ENCODE measurements at regions of chr5 and their contacts with region 1.

Region 1: GRCh38 chr5:151115274-151115905 is 34.6 kb upstream of the TNIP1 start:
- DNase-seq: peak; percentile 77
- ATAC-seq: peak; percentile 76
- H3K4me3 Mint-ChIP-seq: no peak overlapping the region
- H3K27ac Mint-ChIP-seq: peak overlapping the region; percentile 61
- H3K4me1 Mint-ChIP-seq: peaks cover 2% of the 10 kb centered on the region
- H3K27me3 Mint-ChIP-seq: no peaks in the 10 kb centered on the region

Region 2: GRCh38 chr5:150801117-150801927 is 314.1 kb before region 1 on chr5:
- CTCF ChIA-PET with region 1: interaction called, 10 read pairs
- POLR2A ChIA-PET with region 1: no interaction called
- DNase-seq: no peak
- ATAC-seq: peak; percentile 53
- H3K4me3 Mint-ChIP-seq: no peak overlapping the region
- H3K27ac Mint-ChIP-seq: no peak overlapping the region
- H3K4me1 Mint-ChIP-seq: peaks cover 9% of the 10 kb centered on the region
- H3K27me3 Mint-ChIP-seq: peaks cover 3% of the 10 kb centered on the region

Region 3: DNA sequence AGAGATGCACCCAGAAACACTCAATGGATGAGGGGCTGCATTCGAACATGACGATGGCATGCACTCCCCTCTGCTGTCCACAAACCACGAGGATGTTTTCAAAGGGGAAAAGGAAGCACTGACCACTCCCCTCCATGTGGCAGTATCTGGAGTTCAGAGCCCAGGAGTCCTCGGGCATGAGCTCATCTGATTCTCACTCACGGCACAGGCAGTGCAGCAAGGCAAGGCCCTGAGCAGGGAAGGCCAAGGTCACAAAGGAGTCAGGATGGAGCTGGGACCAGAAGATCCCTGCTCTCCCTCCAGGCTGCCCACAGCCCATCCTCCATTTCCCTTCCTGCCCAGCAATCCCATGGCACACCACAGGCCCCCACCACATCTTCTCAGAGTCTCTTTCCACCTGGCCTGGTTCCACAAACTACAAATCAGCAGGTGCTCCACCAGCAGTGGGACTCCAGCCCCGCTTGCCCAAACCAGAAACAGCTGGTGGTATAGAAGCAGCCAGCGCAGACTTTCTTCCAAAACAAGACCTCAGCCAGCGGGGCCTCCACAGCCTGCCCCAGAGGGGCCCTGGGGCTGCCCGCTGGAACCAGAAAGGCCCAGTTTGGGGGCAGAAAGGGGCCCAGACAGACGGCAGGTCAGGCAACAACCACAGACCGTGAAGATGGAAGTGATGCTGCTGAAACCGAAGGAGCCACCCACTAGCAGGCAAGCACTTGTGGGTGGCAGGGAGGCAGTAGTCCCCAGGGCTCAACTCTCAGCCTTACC is 46.8 kb before region 1 on chr5:
- CTCF ChIA-PET with region 1: interaction called, 43 read pairs
- POLR2A ChIA-PET with region 1: no interaction called
- DNase-seq: no peak
- ATAC-seq: peak; percentile 66
- H3K4me3 Mint-ChIP-seq: peak overlapping the region; percentile 28
- H3K27ac Mint-ChIP-seq: peak overlapping the region; percentile 77
- H3K4me1 Mint-ChIP-seq: peaks cover 70% of the 10 kb centered on the region
- H3K27me3 Mint-ChIP-seq: no peaks in the 10 kb centered on the region

Region 4: GRCh38 chr5:151093476-151093889 is 21.9 kb before region 1 on chr5:
- CTCF ChIA-PET with region 1: interaction called, 40 read pairs
- POLR2A ChIA-PET with region 1: interaction called, 3 read pairs
- DNase-seq: no peak
- ATAC-seq: peak; percentile 31
- H3K4me3 Mint-ChIP-seq: peak overlapping the region; percentile 58
- H3K27ac Mint-ChIP-seq: peak overlapping the region; percentile 88
- H3K4me1 Mint-ChIP-seq: peaks cover 70% of the 10 kb centered on the region
- H3K27me3 Mint-ChIP-seq: peaks cover 7% of the 10 kb centered on the region

Region 5: GRCh38 chr5:151141535-151141934 is 26.1 kb after region 1 on chr5:
- CTCF ChIA-PET with region 1: interaction called, 11 read pairs
- POLR2A ChIA-PET with region 1: no interaction called
- DNase-seq: peak; percentile 70
- ATAC-seq: peak; percentile 79
- H3K4me3 Mint-ChIP-seq: peak overlapping the region; percentile 58
- H3K27ac Mint-ChIP-seq: peak overlapping the region; percentile 76
- H3K4me1 Mint-ChIP-seq: peaks cover 93% of the 10 kb centered on the region
- H3K27me3 Mint-ChIP-seq: no peaks in the 10 kb centered on the region

Region 6: DNA sequence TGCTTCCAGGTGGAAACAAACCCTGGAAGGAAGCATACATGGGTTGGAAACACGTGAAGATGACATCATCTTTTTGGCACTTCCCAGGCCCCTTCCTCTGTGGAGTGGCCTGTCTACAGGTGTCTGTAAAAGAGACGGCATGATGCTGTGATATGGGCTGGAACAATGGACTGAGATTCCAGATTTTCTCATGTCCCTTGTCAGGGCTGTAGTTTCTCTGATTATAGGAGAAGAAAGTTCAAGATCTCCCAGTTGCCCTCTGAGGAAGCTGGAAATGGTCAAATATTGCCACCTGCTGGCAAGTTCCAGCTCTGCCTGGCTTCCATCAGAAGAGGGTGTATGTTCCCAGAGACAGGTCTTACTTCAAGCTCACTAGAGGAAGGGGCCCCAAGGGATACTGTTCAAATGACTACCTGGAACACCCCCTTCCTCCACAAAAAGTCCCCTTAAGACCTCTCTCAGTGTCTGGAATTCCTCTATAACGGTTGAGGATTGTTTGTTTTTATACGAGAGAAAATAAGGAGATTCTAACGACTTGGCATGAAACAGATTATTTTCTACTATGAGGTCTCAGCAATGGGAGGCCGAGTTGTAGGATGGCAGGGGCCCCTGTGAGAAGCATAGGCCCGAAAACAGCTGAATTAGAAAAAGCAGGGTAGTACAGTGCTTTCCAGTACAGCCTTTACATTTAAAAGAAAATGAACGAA is 49.4 kb after region 1 on chr5:
- CTCF ChIA-PET with region 1: interaction called, 491 read pairs
- POLR2A ChIA-PET with region 1: no interaction called
- DNase-seq: peak; percentile 88
- ATAC-seq: peak; percentile 98
- H3K4me3 Mint-ChIP-seq: no peak overlapping the region
- H3K27ac Mint-ChIP-seq: no peak overlapping the region
- H3K4me1 Mint-ChIP-seq: peaks cover 9% of the 10 kb centered on the region
- H3K27me3 Mint-ChIP-seq: peaks cover 4% of the 10 kb centered on the region

Region 7: DNA sequence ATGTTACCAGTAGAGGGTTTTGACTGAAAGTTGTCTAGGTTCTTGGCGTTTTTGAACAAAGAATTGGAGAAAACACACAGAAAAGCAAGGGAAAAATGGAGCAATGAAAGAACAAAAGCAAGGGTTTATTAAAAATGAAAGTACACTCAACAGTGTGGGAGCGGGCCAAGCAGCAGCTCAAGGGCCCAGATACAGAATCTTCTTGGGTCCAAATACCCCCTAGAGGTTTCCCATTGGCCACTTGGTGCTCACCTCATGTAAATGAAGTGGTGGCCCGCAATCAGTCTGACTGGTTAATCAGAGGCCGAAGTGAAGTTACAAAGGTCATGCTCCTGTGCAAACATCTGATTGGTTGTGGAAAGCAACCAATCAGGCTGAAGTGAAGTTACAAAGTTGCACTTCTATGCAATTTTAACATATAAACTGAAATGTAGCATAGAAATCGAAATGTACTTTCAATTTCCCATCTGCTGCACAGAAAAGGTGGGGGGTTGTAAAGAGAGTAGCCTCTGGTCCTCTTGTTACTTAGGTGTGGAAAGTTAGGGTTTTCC is 135.7 kb after region 1 on chr5:
- CTCF ChIA-PET with region 1: no interaction called
- POLR2A ChIA-PET with region 1: no interaction called
- DNase-seq: peak; percentile 50
- ATAC-seq: no peak
- H3K4me3 Mint-ChIP-seq: peak overlapping the region; percentile 32
- H3K27ac Mint-ChIP-seq: peak overlapping the region; percentile 4
- H3K4me1 Mint-ChIP-seq: peaks cover 39% of the 10 kb centered on the region
- H3K27me3 Mint-ChIP-seq: no peaks in the 10 kb centered on the region

Measured in activated CD8-positive, alpha-beta T cell treated with anti-CD3 and anti-CD28 coated beads, Interleukin-2, amount 10 ng/mL, durations not matched to agents 7 days and 5 days (primary cell).